Common myeloid progenitor, CD34-positive (primary cell): ENCODE measurements at regions of chrX and their contacts with region 1.

Region 1: DNA sequence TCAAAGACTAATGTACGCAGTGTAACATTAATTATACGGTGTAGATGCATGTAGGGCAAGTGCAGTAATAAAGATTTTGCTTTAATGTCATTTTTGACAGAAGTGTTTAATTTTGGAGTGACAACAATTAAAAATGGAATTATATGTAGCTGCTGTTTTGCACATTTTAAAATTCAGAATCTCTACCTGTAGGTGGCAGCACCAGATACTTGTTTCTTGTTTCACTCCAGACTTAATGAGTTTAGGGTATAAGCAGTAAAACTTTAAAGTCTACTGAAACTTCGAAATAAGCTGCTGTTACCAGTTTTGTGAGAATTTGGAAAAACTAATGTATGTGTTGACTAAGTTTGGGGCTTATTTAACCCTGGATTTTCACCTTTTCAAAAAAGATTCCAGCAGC is 144.9 kb downstream of the POLA1 start:
- DNase-seq: peak; percentile 11 to 55 (median 44)
- H3K4me3 ChIP-seq: no peak overlapping the region
- H3K27ac ChIP-seq: no peak overlapping the region
- H3K4me1 ChIP-seq: no peaks in the 10 kb centered on the region
- H3K27me3 ChIP-seq: no peaks in the 10 kb centered on the region

Region 2: GRCh38 chrX:24828147-24828546 is 10.5 kb before region 1 on chrX:
- CTCF ChIA-PET with region 1: interaction called, 11 read pairs
- POLR2A ChIA-PET with region 1: no interaction called
- DNase-seq: no peak
- H3K4me3 ChIP-seq: no peak overlapping the region
- H3K27ac ChIP-seq: no peak overlapping the region
- H3K4me1 ChIP-seq: no peaks in the 10 kb centered on the region
- H3K27me3 ChIP-seq: no peaks in the 10 kb centered on the region

Region 3: DNA sequence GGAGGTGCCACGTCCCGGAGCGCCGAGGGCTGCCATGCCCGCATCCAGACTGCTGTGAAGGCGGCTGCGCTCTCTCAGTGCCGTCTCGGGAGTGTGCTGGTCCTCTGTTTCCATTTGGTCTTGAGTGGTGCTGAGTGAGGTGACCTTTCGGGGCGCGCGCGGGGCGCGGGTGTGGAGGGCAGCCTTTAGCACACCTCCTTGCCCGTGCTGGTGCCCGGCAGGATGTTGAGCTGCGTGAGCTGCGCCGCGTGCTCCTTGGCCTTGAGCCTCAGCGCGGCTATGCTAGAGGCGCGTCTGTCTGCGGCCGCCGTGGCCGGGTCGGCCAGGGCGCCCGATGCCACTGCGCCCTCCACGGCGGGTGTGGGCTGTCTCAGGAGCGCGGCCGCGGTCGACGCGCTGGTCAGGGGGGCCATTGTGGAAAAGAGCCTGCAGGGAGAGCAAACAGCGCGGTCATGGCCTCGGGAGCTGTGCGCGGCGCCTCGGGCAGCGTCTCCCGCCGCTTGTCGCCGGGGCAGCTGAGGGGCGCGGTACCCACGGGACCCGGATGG is 165.9 kb after region 1 on chrX:
- CTCF ChIA-PET with region 1: no interaction called
- POLR2A ChIA-PET with region 1: no interaction called
- DNase-seq: no peak
- H3K4me3 ChIP-seq: peak overlapping the region in 2 of 7 experiments; percentile 11 to 33
- H3K27ac ChIP-seq: no peak overlapping the region
- H3K4me1 ChIP-seq: peaks cover 0 to 20% (median 9%) of the 10 kb centered on the region in 4 experiments
- H3K27me3 ChIP-seq: peaks cover 12 to 98% (median 52%) of the 10 kb centered on the region in 5 experiments

Region 4: DNA sequence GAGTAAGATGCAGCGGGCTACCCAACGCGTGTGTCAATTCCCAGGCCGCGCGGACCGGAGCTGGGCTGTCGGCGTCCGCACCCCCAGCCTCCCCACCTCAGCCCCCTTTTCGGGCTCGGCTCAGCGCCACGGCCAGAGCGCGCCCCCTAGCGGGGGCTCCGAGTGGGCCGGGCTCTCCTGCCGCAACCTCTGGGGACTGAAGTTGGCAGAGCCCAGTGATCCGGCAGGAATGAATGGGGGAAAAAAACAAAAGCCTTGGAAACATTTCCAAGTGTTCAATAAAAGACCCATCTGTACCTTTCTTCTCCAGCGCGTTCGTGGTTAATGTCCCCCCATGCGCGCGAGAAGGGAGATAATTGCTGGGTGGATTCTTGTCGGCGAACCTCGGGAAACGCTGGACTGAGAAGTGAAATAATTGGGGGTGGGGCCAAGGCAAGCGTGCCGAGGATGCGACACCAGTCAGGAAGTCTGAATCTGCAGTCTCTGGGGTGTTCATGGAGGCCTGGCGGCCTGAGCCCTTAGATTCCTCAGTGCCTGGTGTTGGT is 182.3 kb after region 1 on chrX:
- CTCF ChIA-PET with region 1: interaction called, 13 read pairs
- POLR2A ChIA-PET with region 1: no interaction called
- DNase-seq: peak in 2 of 3 donors; percentile 42 to 48
- H3K4me3 ChIP-seq: peak overlapping the region in 1 of 7 experiments; percentile 23
- H3K27ac ChIP-seq: no peak overlapping the region
- H3K4me1 ChIP-seq: peaks cover 0 to 14% (median 0%) of the 10 kb centered on the region in 4 experiments
- H3K27me3 ChIP-seq: peaks cover 9 to 96% (median 56%) of the 10 kb centered on the region in 5 experiments